Calu3 (cell line): ENCODE measurements at regions of chr6 and their contacts with region 1.

Region 1: GRCh38 chr6:25334793-25335413 is 55.7 kb downstream of the CARMIL1 start:
- DNase-seq: no peak
- H3K4me3 Mint-ChIP-seq: no peak overlapping the region
- H3K27ac Mint-ChIP-seq: no peak overlapping the region
- H3K4me1 Mint-ChIP-seq: peaks cover 71% of the 10 kb centered on the region
- H3K27me3 Mint-ChIP-seq: no peaks in the 10 kb centered on the region
- CTCF ChIP-seq: no peak

Region 2: GRCh38 chr6:25324066-25324762 is 10.7 kb before region 1 on chr6:
- CTCF ChIA-PET with region 1: interaction called, 16 read pairs
- intact Hi-C with region 1: no loop called
- DNase-seq: no peak
- H3K4me3 Mint-ChIP-seq: no peak overlapping the region
- H3K27ac Mint-ChIP-seq: no peak overlapping the region
- H3K4me1 Mint-ChIP-seq: peaks cover 28% of the 10 kb centered on the region
- H3K27me3 Mint-ChIP-seq: no peaks in the 10 kb centered on the region
- CTCF ChIP-seq: no peak

Region 3: DNA sequence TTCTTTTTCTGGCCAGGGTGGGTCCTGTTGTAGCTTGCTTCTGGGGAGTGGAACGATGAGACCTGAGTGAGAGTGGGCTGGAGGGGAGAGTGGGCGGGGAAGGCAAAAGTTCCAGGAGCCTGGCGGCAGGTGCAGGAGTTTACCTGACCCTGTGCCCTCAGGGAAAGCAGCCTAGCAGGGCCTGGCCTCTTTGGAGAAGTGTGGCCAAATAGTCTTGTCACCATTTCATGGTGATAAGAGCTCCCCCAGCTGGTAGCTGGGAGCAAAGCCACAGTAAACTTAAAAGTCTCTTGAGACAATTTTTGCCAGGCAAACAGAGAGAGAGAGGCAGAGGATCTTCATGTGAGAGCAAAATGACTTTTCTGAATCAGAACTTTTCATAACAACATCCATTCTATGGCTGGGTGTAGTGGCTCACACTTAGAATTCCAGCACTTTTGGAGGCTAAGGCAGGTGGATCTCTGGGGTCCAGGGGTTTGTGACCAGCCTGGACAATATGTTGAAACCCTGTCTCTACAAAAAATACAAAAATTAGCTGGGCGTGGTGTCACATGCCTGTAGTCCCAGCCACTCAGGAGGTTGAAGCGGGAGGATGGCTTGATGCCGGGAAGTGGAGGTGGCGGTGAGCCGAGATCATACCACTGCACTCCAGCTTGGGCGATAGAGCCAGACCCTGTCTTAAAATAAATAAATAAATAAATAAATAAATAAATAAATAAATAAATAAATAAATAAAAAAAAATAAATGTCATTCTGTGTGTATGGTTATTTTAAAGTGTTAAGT is 155.3 kb after region 1 on chr6:
- CTCF ChIA-PET with region 1: no interaction called
- intact Hi-C with region 1: loop called (anchors 5 kb)
- DNase-seq: peak; percentile 86
- H3K4me3 Mint-ChIP-seq: no peak overlapping the region
- H3K27ac Mint-ChIP-seq: peak overlapping the region; percentile 2
- H3K4me1 Mint-ChIP-seq: peaks cover 13% of the 10 kb centered on the region
- H3K27me3 Mint-ChIP-seq: no peaks in the 10 kb centered on the region
- CTCF ChIP-seq: peak; percentile 81